Activated CD4-positive, alpha-beta T cell treated with anti-CD3 and anti-CD28 coated beads, Interleukin-2, amount 10 ng/mL, durations not matched to agents 24 days and 14 days (primary cell): ENCODE measurements at regions of chr4 and their contacts with region 1.

Region 1: DNA sequence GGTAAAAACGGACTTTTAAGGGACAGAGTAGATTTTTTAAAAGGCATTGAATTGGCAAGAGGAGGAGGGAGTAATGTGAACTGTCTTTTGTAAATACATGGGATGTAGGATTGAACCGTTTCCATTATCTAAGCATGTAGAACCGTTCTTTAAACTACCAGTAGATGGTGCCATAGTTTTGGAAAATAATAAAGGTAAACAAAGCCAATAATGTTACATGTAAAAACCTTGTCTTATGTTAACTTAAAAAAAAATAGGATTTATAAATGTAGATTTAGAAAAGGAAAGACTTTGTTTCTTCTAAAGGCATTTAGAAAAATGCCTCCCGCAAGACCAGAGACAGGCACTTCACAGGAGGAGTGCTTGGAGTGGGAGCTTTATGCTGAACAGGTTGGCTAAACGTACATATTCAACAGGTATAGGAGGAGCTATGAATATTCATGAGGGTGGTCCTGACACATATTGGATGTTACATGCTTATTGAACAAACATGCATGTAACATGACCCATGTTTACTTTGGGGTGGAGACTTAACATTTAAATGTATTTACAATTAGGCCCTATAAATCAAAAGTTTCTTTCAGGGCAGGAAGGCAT is 45.5 kb upstream of the FAM241A start:
- DNase-seq: no peak
- H3K4me3 Mint-ChIP-seq: no peak overlapping the region
- H3K27ac Mint-ChIP-seq: no peak overlapping the region
- H3K4me1 Mint-ChIP-seq: peaks cover 5% of the 10 kb centered on the region
- H3K27me3 Mint-ChIP-seq: peaks cover 27% of the 10 kb centered on the region

Region 2: DNA sequence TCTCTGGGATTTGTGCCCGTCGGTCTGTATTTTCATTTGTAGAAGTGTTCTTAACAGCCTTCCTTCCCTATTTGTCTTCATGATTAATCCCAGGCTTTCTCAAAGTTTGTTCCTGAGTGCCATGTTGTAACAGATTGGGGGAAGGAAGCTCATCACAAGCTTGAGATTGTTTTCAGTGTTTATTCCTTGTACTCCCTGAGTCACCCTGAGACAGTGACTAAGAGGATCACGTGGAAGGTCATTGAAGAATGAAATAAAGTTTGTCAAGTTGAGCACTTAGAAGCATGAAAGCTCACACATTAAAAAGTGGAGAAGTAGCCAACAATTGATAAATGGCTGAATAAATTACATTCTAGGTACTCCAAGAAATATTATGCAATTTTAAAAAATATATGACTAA is 108.0 kb before region 1 on chr4:
- intact Hi-C with region 1: no loop called
- DNase-seq: no peak
- H3K4me3 Mint-ChIP-seq: no peak overlapping the region
- H3K27ac Mint-ChIP-seq: no peak overlapping the region
- H3K4me1 Mint-ChIP-seq: no peaks in the 10 kb centered on the region
- H3K27me3 Mint-ChIP-seq: peaks cover 12% of the 10 kb centered on the region

Region 3: GRCh38 chr4:112321776-112322684 is 222.2 kb after region 1 on chr4:
- intact Hi-C with region 1: loop called (anchors 5 kb)
- DNase-seq: peak; percentile 93
- H3K4me3 Mint-ChIP-seq: no peak overlapping the region
- H3K27ac Mint-ChIP-seq: no peak overlapping the region
- H3K4me1 Mint-ChIP-seq: peaks cover 29% of the 10 kb centered on the region
- H3K27me3 Mint-ChIP-seq: no peaks in the 10 kb centered on the region

Region 4: GRCh38 chr4:112604589-112604988 is 504.8 kb after region 1 on chr4:
- intact Hi-C with region 1: loop called (anchors 1 kb)
- DNase-seq: peak; percentile 84
- H3K4me3 Mint-ChIP-seq: no peak overlapping the region
- H3K27ac Mint-ChIP-seq: no peak overlapping the region
- H3K4me1 Mint-ChIP-seq: no peaks in the 10 kb centered on the region
- H3K27me3 Mint-ChIP-seq: no peaks in the 10 kb centered on the region